Transverse colon (tissue), 4 donors: ENCODE measurements at regions of chr18 and their contacts with region 1.

Region 1: GRCh38 chr18:6476190-6476589 is 61.5 kb upstream of the L3MBTL4 start:
- DNase-seq: no peak
- H3K4me3 ChIP-seq: no peak overlapping the region
- H3K27ac ChIP-seq: no peak overlapping the region
- H3K4me1 ChIP-seq: no peaks in the 10 kb centered on the region
- H3K27me3 ChIP-seq: no peaks in the 10 kb centered on the region
- CTCF ChIP-seq: no peak
- EP300 ChIP-seq: no peak
- POLR2A ChIP-seq: no peak

Region 2: DNA sequence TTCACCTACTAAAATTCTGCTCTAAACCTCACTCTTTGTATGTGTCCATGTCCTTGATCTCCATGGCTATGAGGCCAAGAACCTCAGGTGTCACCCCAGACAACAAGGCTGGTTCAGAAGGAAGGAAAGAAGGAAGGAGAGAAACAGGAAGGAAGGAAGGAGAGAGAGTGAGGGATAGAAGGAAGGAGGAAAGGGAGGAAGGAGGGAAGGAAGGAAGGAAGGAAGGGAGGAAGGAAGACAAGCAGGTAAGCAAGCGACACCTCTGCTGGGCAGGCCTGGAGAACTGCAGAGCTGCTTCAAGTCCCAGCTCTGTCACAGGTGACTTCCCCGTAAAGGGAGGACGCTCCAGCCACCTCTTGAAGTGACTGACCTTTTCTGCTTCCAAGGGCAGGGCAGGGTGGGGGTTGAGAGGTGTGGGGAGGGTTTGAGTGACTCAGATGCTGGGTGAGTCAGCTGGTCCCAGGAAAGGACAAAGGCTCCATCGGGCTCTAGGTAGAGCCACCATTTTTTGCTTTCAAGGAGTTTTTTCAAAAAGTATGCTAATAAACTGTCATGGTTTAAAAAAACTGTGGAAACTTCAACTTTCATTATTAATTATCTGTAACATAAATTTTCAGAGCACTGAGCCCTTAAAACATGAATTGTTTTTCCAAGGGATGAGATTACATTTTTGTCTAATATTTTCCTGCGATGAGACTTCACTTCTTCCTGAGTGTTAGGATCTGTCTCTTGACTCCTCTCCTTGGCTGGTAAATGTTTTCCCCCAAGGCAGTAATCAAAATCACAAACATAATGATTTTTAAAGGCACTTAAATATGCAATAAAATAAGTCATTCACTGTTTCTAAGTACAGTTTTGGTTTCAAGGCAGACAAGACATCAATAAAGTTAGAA is 28.7 kb after region 1 on chr18:
- in situ Hi-C with region 1: no loop called
- intact Hi-C with region 1: loop called (anchors 1 kb)
- DNase-seq: no peak
- H3K4me3 ChIP-seq: no peak overlapping the region
- H3K27ac ChIP-seq: no peak overlapping the region
- H3K4me1 ChIP-seq: no peaks in the 10 kb centered on the region
- H3K27me3 ChIP-seq: no peaks in the 10 kb centered on the region
- CTCF ChIP-seq: no peak
- EP300 ChIP-seq: no peak
- POLR2A ChIP-seq: no peak